ENCODE measurements at regions of chr14 and their contacts with region 1.

Region 1: DNA sequence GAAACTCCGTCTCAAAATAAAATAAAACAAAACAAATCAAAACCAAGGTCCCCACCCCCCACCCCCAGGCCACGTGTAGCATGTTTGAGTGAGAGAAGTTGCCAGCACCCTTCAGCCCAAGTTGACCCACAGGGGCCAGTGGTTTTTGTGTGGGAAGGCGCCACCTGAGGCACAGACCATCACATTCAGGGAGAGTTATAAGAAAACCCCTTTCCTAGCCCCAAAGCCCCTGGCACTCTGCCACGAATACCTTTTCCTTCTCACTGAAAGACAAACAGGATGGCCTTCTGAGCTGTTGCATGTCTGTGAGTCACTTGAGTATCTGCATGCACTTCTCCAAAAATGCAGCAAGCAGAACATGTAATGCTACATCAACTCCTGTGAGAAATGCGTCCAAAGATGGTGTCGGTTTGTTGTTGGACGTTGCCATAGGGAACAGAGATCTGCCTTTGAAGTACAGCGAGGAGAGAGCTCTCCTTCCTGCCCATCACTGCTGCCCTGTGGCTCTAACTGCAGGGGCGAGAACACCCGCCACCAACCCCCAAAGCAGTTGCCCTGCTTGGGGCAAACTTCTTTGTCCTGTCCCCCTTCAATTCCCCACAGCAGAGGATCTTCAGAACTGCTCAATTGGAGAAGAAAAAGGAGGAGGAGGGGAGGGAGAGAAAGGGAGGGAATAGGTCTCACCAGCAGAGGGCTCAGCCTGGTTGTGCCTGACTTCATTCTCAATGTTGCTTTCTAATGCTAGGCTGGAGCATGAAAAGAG is 2.7 kb upstream of the TRAF3 start:
- DNase-seq: peak; percentile 96
- ATAC-seq: peak; percentile 76
- H3K4me3 ChIP-seq: peak overlapping the region; percentile 35; the same call in 1 of the 2 replicates
- H3K27ac ChIP-seq: peak overlapping the region; percentile 89
- H3K4me1 ChIP-seq: peaks cover 40% of the 10 kb centered on the region
- H3K27me3 ChIP-seq: no peaks in the 10 kb centered on the region
- CTCF ChIP-seq: peak; percentile 77 to 86 (median 85)
- EP300 ChIP-seq: peak; percentile 32 to 75; a peak in 2 of 4 replicates
- POLR2A ChIP-seq: no peak
- RAD21 ChIP-seq: peak; percentile 77

Region 2: DNA sequence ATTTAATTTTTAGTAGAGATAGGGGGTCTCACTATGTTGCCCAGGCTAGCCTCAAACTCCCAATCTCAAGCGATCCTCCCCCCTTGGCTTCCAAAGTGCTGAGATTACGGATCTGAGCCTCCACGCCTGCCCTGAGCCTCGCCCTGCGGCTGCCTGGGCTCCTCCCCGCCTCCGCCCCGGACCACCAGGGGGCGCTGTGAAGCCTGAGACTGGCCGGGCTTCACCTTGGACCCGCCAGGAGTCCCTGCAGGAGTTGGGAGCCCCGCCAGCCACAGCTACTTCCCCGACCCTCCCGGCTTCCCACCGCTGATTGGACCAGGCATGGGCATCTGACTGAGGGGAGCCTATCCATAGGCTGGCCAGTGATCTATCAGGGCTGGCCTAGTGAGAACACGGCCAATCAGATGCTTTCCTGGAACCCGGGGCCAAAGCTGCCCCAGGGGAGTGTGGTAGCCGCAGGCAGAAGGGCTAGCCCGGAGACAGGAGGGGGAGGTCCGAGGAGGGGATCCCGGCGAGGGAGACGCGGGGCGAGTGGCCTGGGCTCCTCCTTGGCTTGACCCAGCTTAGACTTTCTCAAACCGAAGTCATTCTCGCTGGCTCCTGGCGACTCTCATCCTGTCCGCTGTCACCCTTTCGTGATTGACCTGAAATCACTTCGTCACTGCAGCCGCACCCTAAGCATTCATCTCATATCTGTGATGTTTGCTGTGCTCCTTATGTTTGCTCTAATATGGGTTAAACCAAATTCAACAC is 249.9 kb before region 1 on chr14:
- CTCF ChIA-PET with region 1: interaction called, 10 read pairs
- POLR2A ChIA-PET with region 1: no interaction called
- RAD21 ChIA-PET with region 1: interaction called, 5 read pairs
- SMC1A ChIA-PET with region 1: interaction called, 4 read pairs
- in situ Hi-C with region 1: no loop called
- intact Hi-C with region 1: loop called (anchors 10 kb)
- DNase-seq: peak; percentile 96
- ATAC-seq: peak; percentile 99
- H3K4me3 ChIP-seq: peak overlapping the region; percentile 84
- H3K27ac ChIP-seq: peak overlapping the region; percentile 43
- H3K4me1 ChIP-seq: no peaks in the 10 kb centered on the region; the same call in 1 of the 2 replicates
- H3K27me3 ChIP-seq: no peaks in the 10 kb centered on the region
- CTCF ChIP-seq: peak; percentile 96 to 97 (median 97)
- EP300 ChIP-seq: no peak
- POLR2A ChIP-seq: peak; percentile 83
- RAD21 ChIP-seq: peak; percentile 81

Region 3: DNA sequence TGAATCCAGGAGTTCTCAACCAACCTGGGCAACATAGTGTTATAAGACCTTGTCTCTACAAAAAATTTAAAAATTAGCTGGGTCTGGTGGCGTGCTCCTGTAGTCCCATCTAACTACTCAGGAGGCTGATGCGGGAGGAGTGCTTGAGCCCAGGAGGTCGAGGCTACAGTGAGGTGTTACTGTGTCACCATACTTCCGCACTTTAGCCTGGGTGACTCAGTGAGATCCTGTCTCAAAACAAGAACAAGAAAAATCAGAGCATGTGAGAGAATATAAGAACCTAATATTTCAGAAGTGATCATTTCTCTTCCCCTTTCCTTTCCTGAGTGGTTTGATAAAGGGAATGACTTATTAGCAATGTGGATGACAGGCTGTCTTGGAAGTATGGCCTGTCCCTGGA is 12.2 kb after region 1 on chr14:
- CTCF ChIA-PET with region 1: interaction called, 9 read pairs
- POLR2A ChIA-PET with region 1: interaction called, 5 read pairs
- RAD21 ChIA-PET with region 1: interaction called, 20 read pairs
- SMC1A ChIA-PET with region 1: interaction called, 23 read pairs
- in situ Hi-C with region 1: no loop called
- intact Hi-C with region 1: no loop called
- DNase-seq: no peak
- ATAC-seq: peak; percentile 67
- H3K4me3 ChIP-seq: peak overlapping the region; percentile 74; the same call in 1 of the 2 replicates
- H3K27ac ChIP-seq: peak overlapping the region; percentile 81
- H3K4me1 ChIP-seq: peaks cover 27% of the 10 kb centered on the region
- H3K27me3 ChIP-seq: no peaks in the 10 kb centered on the region
- CTCF ChIP-seq: no peak
- EP300 ChIP-seq: no peak
- POLR2A ChIP-seq: peak; percentile 40; the same call in 1 of the 2 replicates
- RAD21 ChIP-seq: no peak

Region 4: DNA sequence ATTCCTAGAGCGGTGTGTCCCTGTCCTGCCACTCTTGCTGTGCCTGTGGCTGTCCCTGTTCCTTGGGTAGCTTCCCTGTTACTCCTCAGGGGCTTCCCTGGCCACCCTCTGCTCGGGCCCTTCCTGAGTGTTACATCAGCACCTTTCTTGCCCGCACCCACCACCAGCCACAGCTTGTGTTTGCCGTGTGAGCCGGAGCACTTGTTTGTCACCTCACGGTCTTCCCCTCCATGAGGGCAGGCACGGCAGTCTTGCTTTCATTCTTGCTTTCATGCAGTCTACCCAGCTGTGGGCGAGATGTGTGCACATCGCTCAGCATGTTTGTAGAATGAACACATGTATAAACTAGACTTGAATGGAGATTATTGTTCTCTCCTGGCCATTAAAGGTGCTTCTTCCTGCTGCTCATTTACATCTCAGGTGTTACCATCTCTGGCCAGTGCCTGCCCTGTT is 44.6 kb after region 1 on chr14:
- CTCF ChIA-PET with region 1: interaction called, 83 read pairs
- POLR2A ChIA-PET with region 1: interaction called, 8 read pairs
- RAD21 ChIA-PET with region 1: interaction called, 86 read pairs
- SMC1A ChIA-PET with region 1: interaction called, 4 read pairs
- in situ Hi-C with region 1: no loop called
- intact Hi-C with region 1: no loop called
- DNase-seq: peak; percentile 89
- ATAC-seq: peak; percentile 90
- H3K4me3 ChIP-seq: peak overlapping the region; percentile 58
- H3K27ac ChIP-seq: peak overlapping the region; percentile 93
- H3K4me1 ChIP-seq: peaks cover 62% of the 10 kb centered on the region
- H3K27me3 ChIP-seq: no peaks in the 10 kb centered on the region
- CTCF ChIP-seq: no peak
- EP300 ChIP-seq: peak; percentile 92 to 94
- POLR2A ChIP-seq: peak; percentile 77
- RAD21 ChIP-seq: no peak

Region 5: GRCh38 chr14:102917469-102918211 is 143.1 kb after region 1 on chr14:
- CTCF ChIA-PET with region 1: interaction called, 7 read pairs
- POLR2A ChIA-PET with region 1: no interaction called
- RAD21 ChIA-PET with region 1: interaction called, 3 read pairs
- SMC1A ChIA-PET with region 1: interaction called, 3 read pairs
- in situ Hi-C with region 1: no loop called
- intact Hi-C with region 1: loop called (anchors 5 kb)
- DNase-seq: no peak
- ATAC-seq: peak; percentile 68
- H3K4me3 ChIP-seq: no peak overlapping the region
- H3K27ac ChIP-seq: peak overlapping the region; percentile 17
- H3K4me1 ChIP-seq: peaks cover 22% of the 10 kb centered on the region
- H3K27me3 ChIP-seq: no peaks in the 10 kb centered on the region; a peak in 2 of 4 replicates
- CTCF ChIP-seq: peak; percentile 73 to 82 (median 75)
- EP300 ChIP-seq: no peak
- POLR2A ChIP-seq: peak; percentile 45
- RAD21 ChIP-seq: peak; percentile 84

Region 6: DNA sequence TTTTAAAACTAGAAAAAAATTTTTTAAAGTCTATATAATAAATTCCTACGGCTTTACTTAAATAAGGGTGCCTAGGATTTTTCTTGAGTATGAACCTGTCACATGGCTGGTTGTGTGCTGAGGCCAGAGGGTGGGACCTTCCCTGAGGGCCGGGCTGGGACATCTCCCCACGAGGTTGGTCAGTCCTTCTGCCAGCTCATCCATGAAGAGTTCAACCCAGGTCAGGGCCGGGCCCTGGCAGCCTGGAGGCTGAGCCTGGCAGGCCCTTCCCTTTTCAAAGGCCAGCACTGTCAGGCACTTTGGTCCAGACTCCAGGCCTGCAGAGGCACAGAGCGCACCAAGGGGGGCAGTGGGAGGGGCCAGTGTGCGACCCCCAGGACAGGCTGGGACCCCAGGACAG is 380.4 kb after region 1 on chr14:
- CTCF ChIA-PET with region 1: no interaction called
- POLR2A ChIA-PET with region 1: no interaction called
- RAD21 ChIA-PET with region 1: no interaction called
- SMC1A ChIA-PET with region 1: no interaction called
- in situ Hi-C with region 1: no loop called
- intact Hi-C with region 1: no loop called
- DNase-seq: no peak
- ATAC-seq: peak; percentile 85
- H3K4me3 ChIP-seq: no peak overlapping the region
- H3K27ac ChIP-seq: no peak overlapping the region
- H3K4me1 ChIP-seq: no peaks in the 10 kb centered on the region; the same call in 1 of the 2 replicates
- H3K27me3 ChIP-seq: no peaks in the 10 kb centered on the region; a peak in 1 of 4 replicates
- CTCF ChIP-seq: no peak
- EP300 ChIP-seq: no peak
- POLR2A ChIP-seq: no peak
- RAD21 ChIP-seq: no peak